ENCODE measurements at regions of chr12 and their contacts with region 1.

Region 1: GRCh38 chr12:7092229-7092985 is at the start of gene C1R:
- DNase-seq: peak; percentile 51
- H3K4me3 Mint-ChIP-seq: peak within 1 kb of the TSS; percentile 80
- H3K27ac Mint-ChIP-seq: peak within 1 kb of the TSS; percentile 0
- H3K4me1 Mint-ChIP-seq: peaks cover 8% of the 10 kb centered on the region
- H3K27me3 Mint-ChIP-seq: peaks cover 6% of the 10 kb centered on the region
- total RNA-seq, gene C1R: 1.7 and 2.0 TPM in 2 replicates

Region 2: DNA sequence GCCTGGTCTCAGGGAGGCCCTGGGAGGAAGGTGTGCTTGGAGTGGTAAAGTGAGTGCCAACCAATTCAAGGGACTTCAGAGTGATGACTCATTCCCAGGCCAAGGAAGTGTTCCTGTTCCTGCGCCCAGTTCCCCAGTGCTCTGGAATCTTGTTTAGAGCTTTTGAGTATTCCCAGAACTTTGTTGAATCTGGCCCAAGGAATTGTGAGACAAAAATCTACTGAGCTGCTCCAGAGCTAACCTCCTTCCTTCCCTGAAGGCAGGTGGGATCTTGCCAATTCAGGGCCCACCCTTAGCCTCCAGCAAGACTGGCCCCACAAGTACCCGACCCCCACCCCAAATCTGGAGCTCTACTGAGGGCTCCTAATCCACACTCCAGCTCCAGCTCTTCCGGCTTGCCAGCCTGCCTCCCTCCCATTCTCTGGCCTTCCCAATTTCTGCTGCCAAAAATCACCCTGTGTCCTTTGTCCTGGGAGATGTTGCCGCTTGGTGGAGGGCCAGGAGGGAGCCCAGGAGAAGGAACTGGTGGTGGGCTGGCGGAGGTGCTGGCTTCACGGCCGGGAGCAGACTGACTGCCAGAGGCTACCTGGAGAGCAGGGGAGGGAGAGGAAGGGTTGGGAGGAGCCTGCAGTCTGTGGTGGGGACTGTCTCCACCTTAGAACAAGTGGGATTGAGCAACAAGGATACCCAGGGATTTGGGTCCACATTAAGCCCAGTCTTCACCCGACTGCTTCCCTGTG is 166.7 kb before region 1 on chr12:
- intact Hi-C with region 1: loop called (anchors 1 kb)
- DNase-seq: no peak
- H3K4me3 Mint-ChIP-seq: peak overlapping the region; percentile 91
- H3K27ac Mint-ChIP-seq: peak overlapping the region; percentile 94
- H3K4me1 Mint-ChIP-seq: peaks cover 44% of the 10 kb centered on the region
- H3K27me3 Mint-ChIP-seq: peaks cover 3% of the 10 kb centered on the region

Region 3: DNA sequence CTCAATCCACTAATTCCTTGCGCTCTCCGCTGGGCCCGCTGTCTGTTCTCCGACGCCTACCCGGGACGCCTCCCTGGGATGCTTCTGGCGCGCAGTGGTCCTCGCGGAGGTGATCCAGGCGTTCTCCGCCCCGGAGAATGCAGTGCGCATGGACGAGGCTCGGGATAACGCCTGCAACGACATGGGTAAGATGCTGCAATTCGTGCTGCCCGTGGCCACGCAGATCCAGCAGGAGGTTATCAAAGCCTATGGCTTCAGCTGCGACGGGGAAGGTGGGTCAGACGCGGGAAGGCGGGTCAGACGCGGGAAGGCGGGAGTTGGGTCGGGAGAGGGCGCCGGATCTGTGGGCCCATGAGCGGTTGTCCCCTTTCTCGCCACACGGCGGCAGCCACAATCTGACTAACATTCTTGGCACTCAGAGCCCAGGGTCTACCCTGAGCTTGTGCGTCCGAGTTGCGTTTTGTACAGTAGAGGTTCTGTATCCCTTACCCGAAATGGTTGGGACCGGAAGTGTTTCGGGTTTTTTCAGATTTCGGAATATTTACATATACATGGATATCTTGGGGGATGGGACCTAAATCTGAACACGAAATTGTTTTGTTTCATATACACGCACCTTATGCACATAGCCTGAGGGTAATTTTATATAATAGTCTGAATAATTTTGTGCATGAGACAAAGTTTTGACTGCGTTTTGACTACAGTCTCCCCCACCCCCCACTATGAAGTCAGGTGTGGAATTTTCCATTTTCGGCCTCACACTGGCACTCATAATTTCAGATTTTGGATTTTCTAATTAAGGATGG is 147.8 kb before region 1 on chr12:
- intact Hi-C with region 1: loop called (anchors 1 kb)
- DNase-seq: peak; percentile 84
- H3K4me3 Mint-ChIP-seq: peak overlapping the region; percentile 96
- H3K27ac Mint-ChIP-seq: peak overlapping the region; percentile 95
- H3K4me1 Mint-ChIP-seq: peaks cover 71% of the 10 kb centered on the region
- H3K27me3 Mint-ChIP-seq: no peaks in the 10 kb centered on the region

Region 4: DNA sequence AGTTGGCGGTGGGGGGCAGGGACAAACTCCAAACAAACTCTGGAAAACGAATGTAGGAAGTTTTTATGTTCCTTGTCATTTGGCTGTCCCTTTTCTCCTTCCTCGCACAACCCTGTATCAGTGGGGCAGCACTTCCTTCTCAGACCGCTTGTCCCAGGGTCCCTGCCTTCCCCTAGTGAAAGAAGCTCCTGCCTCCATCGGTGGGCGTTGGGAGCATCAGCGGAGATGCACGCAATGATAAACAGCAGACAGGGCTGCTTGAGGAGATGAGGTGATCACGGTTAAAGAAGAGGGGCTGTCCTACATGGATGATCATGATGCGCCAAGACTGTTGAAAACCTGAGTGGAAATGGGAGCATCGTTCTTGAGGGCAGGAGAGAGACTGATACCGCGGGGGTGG is 31.3 kb before region 1 on chr12:
- intact Hi-C with region 1: loop called (anchors 1 kb)
- DNase-seq: no peak
- H3K4me3 Mint-ChIP-seq: no peak overlapping the region
- H3K27ac Mint-ChIP-seq: no peak overlapping the region
- H3K4me1 Mint-ChIP-seq: no peaks in the 10 kb centered on the region
- H3K27me3 Mint-ChIP-seq: peaks cover 23% of the 10 kb centered on the region

Region 5: DNA sequence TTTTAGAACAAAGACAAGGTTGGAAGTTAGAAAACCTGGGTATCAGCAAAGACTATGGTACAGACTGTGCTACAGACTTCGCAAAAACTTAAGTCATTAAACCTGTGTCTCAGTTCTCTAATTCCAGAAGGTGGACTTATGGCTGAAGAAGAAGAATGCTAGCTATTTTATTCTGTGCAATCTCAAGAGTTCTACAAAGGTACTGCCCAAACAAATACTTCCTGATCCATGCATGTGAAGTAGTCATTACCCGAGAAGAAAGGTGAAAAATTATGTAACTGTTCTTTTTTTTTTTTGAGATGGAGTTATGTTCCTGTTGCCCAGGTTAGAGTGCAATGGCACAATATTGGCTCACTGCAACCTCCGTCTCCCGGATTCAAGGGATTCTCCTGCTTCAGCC is 889.0 kb after region 1 on chr12:
- intact Hi-C with region 1: no loop called
- DNase-seq: no peak
- H3K4me3 Mint-ChIP-seq: no peak overlapping the region
- H3K27ac Mint-ChIP-seq: no peak overlapping the region
- H3K4me1 Mint-ChIP-seq: peaks cover 11% of the 10 kb centered on the region
- H3K27me3 Mint-ChIP-seq: no peaks in the 10 kb centered on the region

Measured in activated T-helper 1 cell treated with anti-CD3 and anti-CD28 coated beads, Interleukin-12 subunit alpha, Interleukin-12 subunit beta, Interleukin-2, Interleukin-4 antibody, amounts not matched to agents 30 ng/mL and 10 ng/mL and 1 ng/mL, durations not matched to agents 14 hours and 24 hours and 36 hours (primary cell).